ENCODE measurements at regions of chr13 and their contacts with region 1.

Region 1: DNA sequence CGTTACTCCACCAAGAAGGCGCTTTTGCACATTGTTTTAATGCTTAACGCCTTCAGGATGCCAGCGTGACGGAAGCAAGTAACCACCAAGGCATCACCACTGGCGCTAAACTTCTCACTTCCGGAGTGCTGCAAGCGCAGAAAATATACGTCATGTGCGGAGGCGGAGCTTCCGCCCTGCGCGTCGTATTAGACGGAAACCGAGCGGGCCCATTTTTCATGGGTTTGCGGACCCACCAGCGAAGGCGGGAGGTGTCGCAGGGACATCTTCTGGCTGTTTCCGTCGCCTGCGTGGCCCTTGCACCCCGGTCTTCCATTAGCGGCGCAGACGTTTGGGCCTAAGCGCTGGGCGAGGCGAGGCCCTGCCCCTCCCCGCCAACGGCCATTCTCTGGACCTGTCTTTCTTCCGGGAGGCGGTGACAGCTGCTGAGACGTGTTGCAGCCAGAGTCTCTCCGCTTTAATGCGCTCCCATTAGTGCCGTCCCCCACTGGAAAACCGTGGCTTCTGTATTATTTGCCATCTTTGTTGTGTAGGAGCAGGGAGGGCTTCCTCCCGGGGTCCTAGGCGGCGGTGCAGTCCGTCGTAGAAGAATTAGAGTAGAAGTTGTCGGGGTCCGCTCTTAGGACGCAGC is at the start of gene ERCC5:
- DNase-seq: peak; percentile 96
- H3K4me3 Mint-ChIP-seq: peak within 1 kb of the TSS; percentile 98
- H3K27ac Mint-ChIP-seq: peak within 1 kb of the TSS; percentile 99
- H3K4me1 Mint-ChIP-seq: peaks cover 35% of the 10 kb centered on the region
- H3K27me3 Mint-ChIP-seq: no peaks in the 10 kb centered on the region
- total RNA-seq, gene ERCC5: 46.8 and 57.1 TPM in 2 replicates

Region 2: DNA sequence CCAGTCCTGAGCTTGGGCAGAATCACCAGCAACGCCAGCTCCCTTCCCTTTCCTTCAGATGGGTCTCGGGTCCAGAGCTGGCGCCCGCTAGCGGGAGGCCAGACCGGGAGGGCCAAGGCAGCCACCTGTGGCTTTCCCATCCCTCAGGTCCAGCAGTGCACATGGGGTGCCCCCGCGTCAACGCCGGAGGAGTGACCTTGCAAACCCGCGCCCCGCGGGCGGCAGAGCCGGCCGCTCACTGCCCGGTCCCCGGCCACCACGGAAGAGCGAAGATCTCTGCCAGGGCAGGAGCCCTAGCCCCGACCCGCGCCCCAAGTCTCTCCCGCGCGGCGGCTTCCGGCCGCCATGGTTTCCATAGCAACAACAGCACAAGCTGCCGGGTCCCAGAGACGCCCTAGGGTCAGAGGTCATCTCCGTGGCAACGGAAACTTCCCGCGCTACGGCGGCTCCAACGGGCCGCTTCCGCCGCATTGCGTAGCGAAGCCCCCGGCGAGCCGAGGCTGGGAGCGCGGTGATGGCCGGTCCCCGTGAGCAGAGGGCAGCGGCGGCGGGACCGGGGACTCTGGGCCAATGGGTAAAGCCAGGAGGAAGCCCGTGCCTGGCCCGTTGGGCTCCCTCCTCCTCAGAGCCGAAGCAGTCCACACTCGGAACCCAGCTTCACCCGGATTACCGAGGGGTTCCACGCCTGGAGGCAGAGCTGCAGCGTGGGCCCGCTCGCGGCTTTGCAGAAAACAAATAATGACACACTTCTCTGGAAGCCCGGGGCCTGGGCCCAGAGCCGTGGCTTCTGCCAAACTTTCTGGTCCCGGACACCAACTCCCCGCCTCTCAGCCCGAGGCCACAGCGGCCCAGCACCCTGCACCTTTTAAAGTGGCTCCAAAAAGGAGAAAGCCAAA is 451.3 kb before region 1 on chr13:
- intact Hi-C with region 1: loop called (anchors 2 kb)
- DNase-seq: peak; percentile 94
- H3K4me3 Mint-ChIP-seq: peak overlapping the region; percentile 86
- H3K27ac Mint-ChIP-seq: peak overlapping the region; percentile 84
- H3K4me1 Mint-ChIP-seq: peaks cover 26% of the 10 kb centered on the region
- H3K27me3 Mint-ChIP-seq: peaks cover 17% of the 10 kb centered on the region

Region 3: GRCh38 chr13:102596147-102597028 is 249.4 kb before region 1 on chr13 and contains the start of gene TPP2:
- intact Hi-C with region 1: loop called (anchors 1 kb)
- DNase-seq: peak; percentile 97
- H3K4me3 Mint-ChIP-seq: peak within 1 kb of the TSS; percentile 97
- H3K27ac Mint-ChIP-seq: peak within 1 kb of the TSS; percentile 100
- H3K4me1 Mint-ChIP-seq: peaks cover 55% of the 10 kb centered on the region
- H3K27me3 Mint-ChIP-seq: no peaks in the 10 kb centered on the region
- total RNA-seq, gene TPP2: 75.5 and 76.5 TPM in 2 replicates

Region 4: GRCh38 chr13:102724923-102725322 is 120.8 kb before region 1 on chr13:
- intact Hi-C with region 1: loop called (anchors 1 kb)
- DNase-seq: no peak
- H3K4me3 Mint-ChIP-seq: no peak overlapping the region
- H3K27ac Mint-ChIP-seq: no peak overlapping the region
- H3K4me1 Mint-ChIP-seq: peaks cover 8% of the 10 kb centered on the region
- H3K27me3 Mint-ChIP-seq: peaks cover 27% of the 10 kb centered on the region

Region 5: GRCh38 chr13:102779436-102780159 is 66.1 kb before region 1 on chr13:
- intact Hi-C with region 1: loop called (anchors 1 kb)
- DNase-seq: peak; percentile 55
- H3K4me3 Mint-ChIP-seq: peak overlapping the region; percentile 50
- H3K27ac Mint-ChIP-seq: peak overlapping the region; percentile 98
- H3K4me1 Mint-ChIP-seq: peaks cover 36% of the 10 kb centered on the region
- H3K27me3 Mint-ChIP-seq: no peaks in the 10 kb centered on the region

Region 6: GRCh38 chr13:102870677-102871415 is 25.1 kb after region 1 on chr13:
- intact Hi-C with region 1: loop called (anchors 1 kb)
- DNase-seq: no peak
- H3K4me3 Mint-ChIP-seq: no peak overlapping the region
- H3K27ac Mint-ChIP-seq: peak overlapping the region; percentile 35
- H3K4me1 Mint-ChIP-seq: peaks cover 33% of the 10 kb centered on the region
- H3K27me3 Mint-ChIP-seq: no peaks in the 10 kb centered on the region